ENCODE measurements at regions of chr12 and their contacts with region 1.

Region 1: DNA sequence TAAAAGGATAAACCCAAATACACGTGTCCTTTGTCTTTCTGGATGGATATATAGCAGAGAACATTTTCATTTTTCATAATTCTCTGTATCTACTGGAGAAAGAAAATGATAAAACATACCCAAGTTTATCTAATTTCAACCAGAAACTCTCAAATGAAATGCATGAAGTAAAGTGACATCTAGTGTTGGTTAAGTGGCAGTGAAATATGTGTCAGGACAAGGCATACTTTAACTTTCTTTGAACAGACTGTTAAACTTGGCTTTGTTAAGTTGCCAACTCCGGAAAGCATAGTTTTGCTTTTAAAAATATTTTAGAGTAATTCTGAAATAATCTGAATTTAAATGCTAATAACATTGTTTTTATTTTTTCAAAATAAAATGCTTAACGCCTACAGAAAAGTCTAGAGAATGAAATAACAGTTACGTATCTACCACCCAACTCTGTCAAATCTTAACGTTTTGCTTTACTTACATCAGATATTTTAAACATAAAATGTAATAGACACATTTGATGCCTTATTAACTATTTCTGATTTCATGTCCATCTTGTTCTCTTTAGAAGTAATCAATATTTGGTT is 25.2 kb upstream of the NTN4 start:
- DNase-seq: no peak
- ATAC-seq: peak; percentile 39

Region 2: DNA sequence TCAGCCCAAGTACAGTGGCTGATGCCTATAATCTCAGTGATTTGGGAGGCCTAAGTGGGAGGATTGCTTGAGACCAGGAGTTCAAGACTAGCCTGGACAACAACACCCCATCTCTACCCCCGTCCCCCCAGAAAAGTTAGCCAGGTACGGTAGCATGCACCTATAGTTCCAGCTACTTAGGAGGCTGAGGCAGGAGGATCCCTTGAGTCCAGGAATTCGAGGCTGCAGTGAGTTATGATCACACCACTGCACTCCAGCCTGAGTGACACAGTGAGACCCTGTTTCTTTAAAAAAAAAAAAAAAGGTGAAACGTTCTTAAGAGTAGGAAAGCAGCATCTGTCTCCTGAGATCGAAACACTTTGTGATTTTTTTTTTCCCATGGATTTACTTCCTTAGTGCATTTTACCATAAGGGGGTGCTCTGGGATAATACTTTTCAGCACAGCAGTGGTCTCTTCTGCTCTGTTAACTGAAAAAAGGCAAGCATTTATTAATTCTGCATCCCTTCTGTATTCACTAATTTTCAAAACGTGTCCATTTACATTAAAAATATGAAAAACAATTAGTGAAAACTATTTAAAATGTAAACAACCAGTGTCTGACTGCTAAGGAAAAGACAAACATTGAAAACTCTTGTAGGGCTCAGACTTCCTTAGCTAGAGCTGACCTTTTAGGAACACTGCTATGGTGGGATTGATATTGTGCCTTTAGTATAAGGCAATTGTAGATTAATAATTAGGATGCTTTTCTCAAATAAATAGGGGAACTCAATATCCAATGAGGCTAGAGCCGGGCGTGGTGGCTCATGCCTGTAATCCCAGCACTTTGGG is 233.3 kb before region 1 on chr12:
- intact Hi-C with region 1: loop called (anchors 1 kb)
- DNase-seq: no peak
- ATAC-seq: peak; percentile 69

Region 3: DNA sequence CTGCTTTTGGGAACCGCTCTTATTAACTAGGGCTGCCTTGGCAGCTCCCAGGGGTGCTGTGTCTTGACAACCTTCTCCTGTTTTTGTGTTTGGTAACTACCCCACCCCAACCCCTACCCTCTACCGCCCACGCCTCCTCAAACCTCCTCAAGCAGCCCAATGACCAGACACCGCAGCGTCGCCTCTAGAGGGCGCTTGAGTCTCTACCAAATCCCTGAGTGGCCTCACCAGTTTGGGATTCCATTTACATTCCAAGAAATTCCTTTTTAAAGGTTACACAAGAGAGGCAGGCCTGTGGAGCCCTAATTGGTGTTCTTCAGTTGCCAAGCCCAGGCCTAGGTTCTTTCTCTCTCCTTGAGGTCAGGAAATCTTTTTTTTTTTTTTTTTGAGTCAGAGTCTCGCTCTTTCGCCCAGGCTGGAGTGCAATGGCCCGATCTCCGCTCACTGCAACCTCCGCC is 192.1 kb before region 1 on chr12:
- intact Hi-C with region 1: loop called (anchors 1 kb)
- DNase-seq: peak; percentile 76
- ATAC-seq: peak; percentile 78

Region 4: GRCh38 chr12:95870897-95871296 is 55.2 kb after region 1 on chr12:
- intact Hi-C with region 1: no loop called
- DNase-seq: no peak
- ATAC-seq: no peak

Region 5: GRCh38 chr12:95998611-95999286 is 183.0 kb after region 1 on chr12:
- intact Hi-C with region 1: loop called (anchors 5 kb)
- DNase-seq: no peak
- ATAC-seq: peak; percentile 85

Measured in Right ventricle myocardium inferior (tissue), 1 donor.